ENCODE measurements at regions of chr13 and their contacts with region 1.

Region 1: GRCh38 chr13:27266917-27267316 is 3.7 kb upstream of the RASL11A start:
- DNase-seq: no peak
- H3K4me3 ChIP-seq: no peak overlapping the region
- H3K27ac ChIP-seq: peak overlapping the region; percentile 18
- H3K4me1 ChIP-seq: peaks cover 4% of the 10 kb centered on the region
- H3K27me3 ChIP-seq: no peaks in the 10 kb centered on the region
- CTCF ChIP-seq: no peak

Region 2: DNA sequence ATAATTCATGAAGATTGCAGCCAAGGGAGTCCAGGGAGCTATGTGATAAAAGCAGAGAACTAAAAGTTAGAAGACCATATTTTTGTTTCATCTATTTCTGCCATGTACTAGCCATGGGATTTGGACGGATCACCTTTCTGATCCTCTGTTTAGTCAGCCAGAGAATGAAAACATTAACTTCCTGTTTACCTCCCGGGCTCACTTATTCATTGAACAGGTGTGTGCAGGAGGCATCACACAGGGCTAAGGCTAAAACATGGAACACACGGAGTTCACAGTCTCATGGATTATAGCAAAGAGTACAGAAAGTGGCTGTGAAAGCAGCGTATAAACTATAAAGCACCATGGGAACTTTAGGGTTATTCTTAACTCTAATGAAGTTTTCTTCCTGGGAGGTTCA is 603.1 kb before region 1 on chr13:
- CTCF ChIA-PET with region 1: no interaction called
- POLR2A ChIA-PET with region 1: no interaction called
- intact Hi-C with region 1: no loop called
- DNase-seq: no peak
- H3K4me3 ChIP-seq: no peak overlapping the region
- H3K27ac ChIP-seq: no peak overlapping the region
- H3K4me1 ChIP-seq: no peaks in the 10 kb centered on the region
- H3K27me3 ChIP-seq: no peaks in the 10 kb centered on the region
- CTCF ChIP-seq: no peak

Region 3: DNA sequence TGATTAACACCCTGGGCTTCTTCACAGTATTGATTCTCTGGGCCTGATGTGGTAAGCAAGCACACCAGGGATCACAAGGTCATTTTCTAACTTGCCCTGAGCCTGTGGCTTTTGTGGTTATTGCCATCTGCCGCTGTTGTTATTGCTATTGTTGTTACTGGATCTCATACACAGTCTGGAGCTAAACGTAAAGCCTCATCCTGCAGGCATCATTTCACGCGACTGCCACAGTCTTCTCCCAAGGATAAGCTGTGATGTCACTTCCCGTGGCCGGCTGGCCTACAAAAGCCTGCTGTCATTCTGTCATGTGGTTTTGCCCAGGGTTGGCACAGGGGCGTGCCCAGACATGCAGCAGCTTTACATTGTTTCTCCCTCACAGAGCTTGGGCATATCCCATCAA is 352.3 kb before region 1 on chr13:
- CTCF ChIA-PET with region 1: no interaction called
- POLR2A ChIA-PET with region 1: interaction called, 10 read pairs
- intact Hi-C with region 1: no loop called
- DNase-seq: peak; percentile 34
- H3K4me3 ChIP-seq: no peak overlapping the region
- H3K27ac ChIP-seq: no peak overlapping the region
- H3K4me1 ChIP-seq: no peaks in the 10 kb centered on the region
- H3K27me3 ChIP-seq: peaks cover 13% of the 10 kb centered on the region
- CTCF ChIP-seq: no peak

Region 4: DNA sequence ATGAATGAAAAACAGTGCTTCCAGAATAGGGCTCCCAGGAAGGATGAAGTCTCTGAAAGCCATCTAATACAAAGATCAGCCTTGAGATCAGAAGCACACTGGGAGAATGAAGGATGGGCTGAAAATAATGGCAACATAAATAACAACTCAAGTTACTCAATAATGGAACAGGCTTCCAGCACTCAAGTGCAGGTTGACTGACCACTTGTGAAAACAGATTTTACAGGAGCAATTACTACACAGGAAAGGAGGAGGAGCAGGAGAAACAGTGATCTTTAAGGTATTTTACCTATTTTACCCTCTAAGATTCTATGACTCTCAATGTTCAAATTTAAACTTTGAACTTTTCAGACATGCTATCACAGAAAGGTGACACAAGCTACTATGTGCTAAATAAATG is 201.3 kb before region 1 on chr13:
- CTCF ChIA-PET with region 1: no interaction called
- POLR2A ChIA-PET with region 1: interaction called, 15 read pairs
- intact Hi-C with region 1: no loop called
- DNase-seq: no peak
- H3K4me3 ChIP-seq: no peak overlapping the region
- H3K27ac ChIP-seq: no peak overlapping the region
- H3K4me1 ChIP-seq: no peaks in the 10 kb centered on the region
- H3K27me3 ChIP-seq: no peaks in the 10 kb centered on the region
- CTCF ChIP-seq: no peak

Region 5: GRCh38 chr13:27327633-27328032 is 60.7 kb after region 1 on chr13:
- CTCF ChIA-PET with region 1: no interaction called
- POLR2A ChIA-PET with region 1: interaction called, 10 read pairs
- intact Hi-C with region 1: no loop called
- DNase-seq: no peak
- H3K4me3 ChIP-seq: no peak overlapping the region
- H3K27ac ChIP-seq: no peak overlapping the region
- H3K4me1 ChIP-seq: no peaks in the 10 kb centered on the region
- H3K27me3 ChIP-seq: peaks cover 20% of the 10 kb centered on the region
- CTCF ChIP-seq: no peak

Region 6: GRCh38 chr13:27496536-27497273 is 229.8 kb after region 1 on chr13:
- CTCF ChIA-PET with region 1: no interaction called
- POLR2A ChIA-PET with region 1: no interaction called
- intact Hi-C with region 1: no loop called
- DNase-seq: no peak
- H3K4me3 ChIP-seq: no peak overlapping the region
- H3K27ac ChIP-seq: no peak overlapping the region
- H3K4me1 ChIP-seq: no peaks in the 10 kb centered on the region
- H3K27me3 ChIP-seq: no peaks in the 10 kb centered on the region
- CTCF ChIP-seq: no peak